Activated naive CD4-positive, alpha-beta T cell treated with anti-CD3 and anti-CD28 coated beads for 36 hours (primary cell): ENCODE measurements at regions of chr12 and their contacts with region 1.

Region 1: GRCh38 chr12:6752921-6753771 is at the start of gene MLF2:
- DNase-seq: peak; percentile 99
- H3K4me3 Mint-ChIP-seq: peak within 1 kb of the TSS; percentile 96
- H3K27ac Mint-ChIP-seq: peak within 1 kb of the TSS; percentile 97
- H3K4me1 Mint-ChIP-seq: peaks cover 25% of the 10 kb centered on the region
- H3K27me3 Mint-ChIP-seq: no peaks in the 10 kb centered on the region
- total RNA-seq, gene MLF2: 140 to 143 TPM

Region 2: DNA sequence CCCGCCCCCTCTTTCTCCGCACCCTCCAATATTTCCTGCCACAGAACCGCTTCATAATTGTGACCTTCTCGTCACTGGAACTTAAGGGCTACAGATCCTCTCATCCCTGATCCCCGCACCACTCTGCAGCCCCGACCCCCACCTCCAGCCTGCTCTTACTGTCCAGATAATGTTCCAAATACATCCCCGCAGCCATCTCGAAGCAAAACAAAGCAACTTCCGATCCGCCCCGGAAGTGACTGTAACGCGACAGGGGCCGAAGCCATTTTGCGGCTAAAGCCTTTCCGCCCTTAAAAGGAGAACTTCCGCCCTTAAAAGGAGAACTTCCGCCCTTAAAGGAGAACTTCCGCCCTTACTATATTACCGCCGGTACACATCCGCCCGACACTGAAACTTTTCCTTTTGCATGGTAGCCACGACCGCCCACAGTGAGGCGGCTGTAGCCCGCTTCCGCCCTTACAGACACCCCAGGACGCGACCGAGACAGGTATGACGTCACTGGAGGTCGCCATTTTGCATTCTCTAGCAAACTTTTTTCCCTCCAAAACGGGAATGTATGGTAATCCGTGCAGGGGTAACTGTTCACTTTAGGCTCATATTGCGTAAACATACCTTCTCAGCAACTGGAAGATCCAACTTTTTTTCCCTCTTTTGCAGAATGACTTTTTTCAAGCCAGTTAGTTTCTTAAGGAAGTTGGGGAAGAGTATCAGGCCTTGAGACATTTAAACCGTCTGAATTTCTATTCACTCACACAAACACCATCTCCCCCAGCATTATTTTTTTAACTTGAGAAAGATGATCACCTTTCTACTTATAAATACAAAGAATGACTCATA is 90.0 kb before region 1 on chr12 and contains the start of gene ING4:
- CTCF ChIA-PET with region 1: no interaction called
- intact Hi-C with region 1: loop called (anchors 1 kb)
- DNase-seq: peak; percentile 99
- H3K4me3 Mint-ChIP-seq: peak within 1 kb of the TSS; percentile 86
- H3K27ac Mint-ChIP-seq: peak within 1 kb of the TSS; percentile 88
- H3K4me1 Mint-ChIP-seq: peaks cover 25% of the 10 kb centered on the region
- H3K27me3 Mint-ChIP-seq: no peaks in the 10 kb centered on the region
- total RNA-seq, gene ING4: 17.3 to 17.8 TPM

Region 3: GRCh38 chr12:6766651-6767349 is 13.7 kb after region 1 on chr12:
- CTCF ChIA-PET with region 1: interaction called, 44 read pairs
- intact Hi-C with region 1: loop called (anchors 1 kb)
- DNase-seq: peak; percentile 57
- H3K4me3 Mint-ChIP-seq: peak overlapping the region; percentile 85
- H3K27ac Mint-ChIP-seq: peak overlapping the region; percentile 52
- H3K4me1 Mint-ChIP-seq: peaks cover 38% of the 10 kb centered on the region
- H3K27me3 Mint-ChIP-seq: peaks cover 34% of the 10 kb centered on the region

Region 4: DNA sequence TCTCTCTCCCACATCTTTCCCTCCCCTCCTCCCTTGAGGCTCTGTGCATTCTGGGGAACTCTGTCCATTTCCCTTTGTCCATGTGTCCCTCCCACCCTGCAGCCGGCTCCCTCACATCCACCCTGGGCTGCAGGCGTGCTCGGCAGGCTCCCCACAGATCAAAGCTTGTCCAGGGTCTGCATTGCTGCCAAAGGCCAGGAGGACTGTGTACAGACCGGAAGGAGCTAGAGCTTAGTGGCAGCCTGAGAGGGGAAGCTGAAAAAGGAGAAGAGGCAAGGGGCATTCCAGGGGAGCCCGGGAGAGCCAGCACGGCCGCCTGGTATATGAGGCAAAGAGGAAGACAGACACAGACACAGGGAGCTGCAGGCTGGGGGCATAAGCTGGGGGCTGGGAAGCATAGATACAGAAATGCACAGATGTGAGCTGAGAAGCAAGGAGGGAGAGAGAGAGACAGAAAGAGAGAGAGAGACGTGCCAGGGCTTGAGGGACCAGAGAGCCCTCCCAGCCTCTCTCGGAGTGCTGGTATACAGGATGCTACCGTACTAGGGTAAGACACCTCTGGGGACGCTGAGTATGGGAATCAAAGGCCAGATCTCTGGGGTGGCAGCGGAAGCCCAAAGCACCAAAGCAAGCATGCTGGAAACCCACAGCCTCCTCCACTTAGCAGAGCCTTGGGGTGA is 39.5 kb after region 1 on chr12:
- CTCF ChIA-PET with region 1: interaction called, 24 read pairs
- intact Hi-C with region 1: loop called (anchors 1 kb)
- DNase-seq: peak; percentile 61
- H3K4me3 Mint-ChIP-seq: peak overlapping the region; percentile 97
- H3K27ac Mint-ChIP-seq: peak overlapping the region; percentile 96
- H3K4me1 Mint-ChIP-seq: peaks cover 51% of the 10 kb centered on the region
- H3K27me3 Mint-ChIP-seq: no peaks in the 10 kb centered on the region

Region 5: DNA sequence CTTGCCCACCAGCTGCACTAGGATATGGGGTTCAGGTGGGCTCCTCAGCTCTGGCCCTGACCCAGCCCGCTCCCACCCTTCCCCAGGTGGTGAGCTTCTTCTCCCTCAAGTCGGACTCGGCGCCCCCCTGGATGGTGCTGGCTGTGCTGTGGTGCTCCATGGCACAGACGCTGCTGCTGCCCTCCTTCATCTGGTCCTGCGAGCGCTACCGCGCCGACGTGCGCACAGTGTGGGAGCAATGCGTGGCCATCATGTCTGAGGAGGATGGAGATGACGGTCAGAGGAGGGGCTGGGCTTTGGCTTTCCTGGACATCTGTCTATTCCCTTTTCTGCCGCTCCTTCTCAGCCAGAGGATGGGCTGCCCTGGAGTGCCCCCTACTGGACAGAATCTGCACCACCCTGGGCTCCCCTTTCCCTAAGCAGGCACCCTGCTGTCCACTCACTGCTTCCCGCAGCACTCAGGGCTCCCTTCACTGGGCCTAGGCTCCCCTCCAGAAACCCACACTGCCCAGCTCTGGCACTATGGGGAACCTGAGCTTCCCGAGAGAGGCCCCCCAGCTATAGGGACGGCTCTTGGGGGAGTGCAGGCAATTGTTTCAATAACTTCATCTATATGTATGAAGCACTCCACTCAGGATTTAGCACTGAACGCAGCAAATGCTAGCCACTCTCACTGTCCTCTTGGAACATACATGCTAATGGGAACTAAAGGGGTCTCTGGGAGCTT is 72.4 kb after region 1 on chr12:
- CTCF ChIA-PET with region 1: interaction called, 166 read pairs
- intact Hi-C with region 1: loop called (anchors 1 kb)
- DNase-seq: peak; percentile 92
- H3K4me3 Mint-ChIP-seq: no peak overlapping the region
- H3K27ac Mint-ChIP-seq: no peak overlapping the region
- H3K4me1 Mint-ChIP-seq: peaks cover 28% of the 10 kb centered on the region
- H3K27me3 Mint-ChIP-seq: peaks cover 19% of the 10 kb centered on the region

Region 6: DNA sequence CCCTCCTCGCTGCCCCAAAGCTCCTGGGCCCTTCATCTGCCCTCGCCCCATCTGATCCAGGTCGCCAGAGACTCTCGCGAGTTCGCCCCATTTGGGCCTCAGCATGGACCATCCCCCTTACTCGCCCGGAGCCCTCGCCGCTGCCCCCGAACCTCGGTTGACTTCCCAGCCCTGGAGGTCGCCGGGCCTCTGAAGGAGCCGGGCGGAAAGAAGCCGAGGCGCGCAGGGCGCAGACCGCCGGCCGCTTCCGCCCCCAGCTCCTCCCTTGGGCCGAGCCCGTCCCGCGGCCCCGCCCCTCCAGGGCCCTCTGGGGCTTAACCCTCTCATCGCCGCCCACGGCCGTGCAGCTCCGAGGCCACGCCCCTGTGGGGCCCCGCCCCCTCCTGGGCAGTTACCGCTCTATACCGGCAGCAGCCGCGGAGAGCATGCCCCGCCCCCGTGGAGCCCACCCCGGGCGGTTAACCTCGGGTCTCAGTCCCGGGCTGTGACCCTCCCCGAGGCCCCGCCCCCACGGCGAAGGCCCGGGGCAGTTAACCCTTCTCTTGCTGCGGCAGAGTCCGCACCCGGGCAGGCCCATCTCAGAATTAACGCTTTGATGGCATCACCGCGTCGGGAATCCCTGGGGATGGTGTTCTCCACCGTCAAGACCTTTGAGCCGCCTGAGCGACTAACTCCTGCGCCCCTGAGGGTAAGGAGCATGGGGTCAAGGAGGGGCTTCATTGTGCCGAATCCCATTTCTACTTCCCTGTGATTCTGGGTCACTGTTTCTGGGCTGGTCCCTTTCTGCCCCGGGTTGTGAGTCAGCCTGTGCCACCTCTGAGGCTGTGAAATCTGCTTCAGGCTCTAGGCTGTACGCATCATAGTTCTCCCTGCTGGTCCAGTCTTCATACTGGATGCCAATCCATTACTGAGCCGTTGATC is 120.2 kb after region 1 on chr12 and contains the start of gene SPSB2:
- CTCF ChIA-PET with region 1: interaction called, 4 read pairs
- intact Hi-C with region 1: loop called (anchors 1 kb)
- DNase-seq: peak; percentile 99
- H3K4me3 Mint-ChIP-seq: peak within 1 kb of the TSS; percentile 88
- H3K27ac Mint-ChIP-seq: peak within 1 kb of the TSS; percentile 81
- H3K4me1 Mint-ChIP-seq: peaks cover 45% of the 10 kb centered on the region
- H3K27me3 Mint-ChIP-seq: no peaks in the 10 kb centered on the region
- total RNA-seq, gene SPSB2: 2.6 to 2.8 TPM